IMR-90 (cell line): ENCODE measurements at regions of chr1 and their contacts with region 1.

Region 1: GRCh38 chr1:213122514-213122929 is 71.5 kb downstream of the RPS6KC1 start:
- DNase-seq: peak; percentile 71
- ATAC-seq: peak; percentile 55
- H3K4me3 ChIP-seq: no peak overlapping the region
- H3K27ac ChIP-seq: no peak overlapping the region
- H3K4me1 ChIP-seq: peaks cover 10% of the 10 kb centered on the region
- H3K27me3 ChIP-seq: no peaks in the 10 kb centered on the region
- CTCF ChIP-seq: peak; percentile 59
- POLR2A ChIP-seq: no peak
- RAD21 ChIP-seq: peak; percentile 57

Region 2: GRCh38 chr1:213221209-213221608 is 98.7 kb after region 1 on chr1:
- CTCF ChIA-PET with region 1: no interaction called
- POLR2A ChIA-PET with region 1: no interaction called
- dilution Hi-C with region 1: no loop called
- in situ Hi-C with region 1: no loop called
- intact Hi-C with region 1: loop called (anchors 5 kb)
- DNase-seq: no peak
- ATAC-seq: no peak
- H3K4me3 ChIP-seq: no peak overlapping the region
- H3K27ac ChIP-seq: no peak overlapping the region
- H3K4me1 ChIP-seq: no peaks in the 10 kb centered on the region
- H3K27me3 ChIP-seq: no peaks in the 10 kb centered on the region
- CTCF ChIP-seq: no peak
- POLR2A ChIP-seq: no peak
- RAD21 ChIP-seq: no peak

Region 3: DNA sequence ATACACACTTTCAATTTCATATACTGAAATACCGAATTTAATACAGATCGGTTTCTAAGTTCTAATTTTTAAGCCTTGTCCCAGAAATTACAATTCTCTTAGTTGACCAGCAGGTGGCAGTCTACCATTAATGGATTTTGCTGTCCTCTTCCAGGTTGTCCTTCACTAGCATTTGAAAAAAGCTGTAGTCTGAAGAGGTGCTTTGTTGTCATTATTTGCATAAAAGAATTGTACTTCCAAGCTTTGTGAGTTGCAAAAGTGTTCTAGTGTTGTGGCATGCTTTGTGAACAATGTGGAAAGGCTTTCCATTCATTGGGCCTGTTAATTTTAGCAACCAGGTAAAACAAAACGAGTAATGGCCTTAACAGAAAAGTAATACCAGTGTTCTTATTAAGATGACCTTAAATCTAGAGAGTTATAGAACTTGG is 122.2 kb after region 1 on chr1:
- CTCF ChIA-PET with region 1: no interaction called
- POLR2A ChIA-PET with region 1: no interaction called
- dilution Hi-C with region 1: no loop called
- in situ Hi-C with region 1: no loop called
- intact Hi-C with region 1: loop called (anchors 10 kb)
- DNase-seq: peak; percentile 65
- ATAC-seq: peak; percentile 63
- H3K4me3 ChIP-seq: no peak overlapping the region
- H3K27ac ChIP-seq: no peak overlapping the region
- H3K4me1 ChIP-seq: peaks cover 1% of the 10 kb centered on the region; the same call in 1 of the 2 replicates
- H3K27me3 ChIP-seq: no peaks in the 10 kb centered on the region
- CTCF ChIP-seq: peak; percentile 79
- POLR2A ChIP-seq: no peak
- RAD21 ChIP-seq: peak; percentile 72

Region 4: GRCh38 chr1:213374369-213374768 is 251.8 kb after region 1 on chr1:
- CTCF ChIA-PET with region 1: no interaction called
- POLR2A ChIA-PET with region 1: no interaction called
- dilution Hi-C with region 1: no loop called
- in situ Hi-C with region 1: no loop called
- intact Hi-C with region 1: loop called (anchors 2 kb)
- DNase-seq: peak; percentile 32
- ATAC-seq: peak; percentile 92
- H3K4me3 ChIP-seq: no peak overlapping the region
- H3K27ac ChIP-seq: no peak overlapping the region
- H3K4me1 ChIP-seq: no peaks in the 10 kb centered on the region
- H3K27me3 ChIP-seq: no peaks in the 10 kb centered on the region
- CTCF ChIP-seq: peak; percentile 78
- POLR2A ChIP-seq: no peak
- RAD21 ChIP-seq: peak; percentile 58